Dendritic cell treated with granulocyte-macrophage colony-stimulating factor and Interleukin-4, amounts not matched to agents 40 ng/mL and 50 ng/mL, for 4 days (primary cell): ENCODE measurements at regions of chr4 and their contacts with region 1.

Region 1: GRCh38 chr4:14695095-14695845 is 307.0 kb upstream of the CPEB2 start:
- H3K4me3 Mint-ChIP-seq: no peak overlapping the region
- H3K27ac Mint-ChIP-seq: no peak overlapping the region
- H3K4me1 Mint-ChIP-seq: no peaks in the 10 kb centered on the region
- H3K27me3 Mint-ChIP-seq: no peaks in the 10 kb centered on the region

Region 2: GRCh38 chr4:14652522-14652921 is 42.7 kb before region 1 on chr4:
- intact Hi-C with region 1: loop called (anchors 2 kb)
- H3K4me3 Mint-ChIP-seq: no peak overlapping the region
- H3K27ac Mint-ChIP-seq: no peak overlapping the region
- H3K4me1 Mint-ChIP-seq: no peaks in the 10 kb centered on the region
- H3K27me3 Mint-ChIP-seq: no peaks in the 10 kb centered on the region